ENCODE measurements at regions of chr1 and their contacts with region 1.

Region 1: GRCh38 chr1:225777583-225778336 is at the start of gene SRP9:
- DNase-seq: peak; percentile 100
- H3K4me3 Mint-ChIP-seq: no peak within 1 kb of the TSS
- H3K27ac Mint-ChIP-seq: no peak within 1 kb of the TSS
- H3K4me1 Mint-ChIP-seq: peaks cover 21% of the 10 kb centered on the region
- H3K27me3 Mint-ChIP-seq: no peaks in the 10 kb centered on the region
- CTCF ChIP-seq: peak; percentile 96
- total RNA-seq, gene SRP9: 417 and 511 TPM in 2 replicates

Region 2: GRCh38 chr1:225517697-225518096 is 260.1 kb before region 1 on chr1:
- CTCF ChIA-PET with region 1: interaction called, 8 read pairs
- POLR2A ChIA-PET with region 1: interaction called, 11 read pairs
- intact Hi-C with region 1: no loop called
- DNase-seq: no peak
- H3K4me3 Mint-ChIP-seq: no peak overlapping the region
- H3K27ac Mint-ChIP-seq: no peak overlapping the region
- H3K4me1 Mint-ChIP-seq: peaks cover 5% of the 10 kb centered on the region
- H3K27me3 Mint-ChIP-seq: no peaks in the 10 kb centered on the region
- CTCF ChIP-seq: no peak

Region 3: GRCh38 chr1:225652729-225653462 is 124.9 kb before region 1 on chr1 and contains the start of gene ENAH:
- CTCF ChIA-PET with region 1: interaction called, 68 read pairs
- POLR2A ChIA-PET with region 1: interaction called, 188 read pairs
- intact Hi-C with region 1: loop called (anchors 1 kb)
- DNase-seq: peak; percentile 93
- H3K4me3 Mint-ChIP-seq: peak within 1 kb of the TSS; percentile 99
- H3K27ac Mint-ChIP-seq: peak within 1 kb of the TSS; percentile 94
- H3K4me1 Mint-ChIP-seq: peaks cover 67% of the 10 kb centered on the region
- H3K27me3 Mint-ChIP-seq: no peaks in the 10 kb centered on the region
- CTCF ChIP-seq: no peak
- total RNA-seq, gene ENAH: 346 and 420 TPM in 2 replicates

Region 4: DNA sequence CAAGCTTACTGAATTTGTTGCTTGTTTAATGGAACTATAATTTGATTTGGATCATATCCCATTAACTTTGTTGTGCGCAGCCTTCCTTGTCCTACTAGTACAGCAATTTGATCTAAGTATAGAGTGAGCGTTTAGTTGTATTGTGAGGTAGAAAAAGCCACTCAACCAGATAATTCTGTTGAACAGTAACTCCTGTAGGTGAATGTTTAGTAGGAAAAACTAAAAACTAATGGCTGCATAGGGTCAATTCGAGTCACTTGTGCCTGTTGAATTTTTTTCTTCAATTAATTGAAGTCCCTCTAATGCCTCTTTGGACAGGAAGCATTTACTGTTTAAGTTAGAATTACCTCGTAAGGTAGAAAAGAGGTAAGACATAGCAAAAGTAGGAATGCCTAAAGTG is 17.2 kb after region 1 on chr1:
- CTCF ChIA-PET with region 1: interaction called, 10 read pairs
- POLR2A ChIA-PET with region 1: interaction called, 36 read pairs
- intact Hi-C with region 1: no loop called
- DNase-seq: no peak
- H3K4me3 Mint-ChIP-seq: no peak overlapping the region
- H3K27ac Mint-ChIP-seq: no peak overlapping the region
- H3K4me1 Mint-ChIP-seq: no peaks in the 10 kb centered on the region
- H3K27me3 Mint-ChIP-seq: no peaks in the 10 kb centered on the region
- CTCF ChIP-seq: no peak

Region 5: GRCh38 chr1:225881969-225882693 is 104.4 kb after region 1 on chr1 and contains the start of gene TMEM63A:
- CTCF ChIA-PET with region 1: interaction called, 25 read pairs
- POLR2A ChIA-PET with region 1: interaction called, 70 read pairs
- intact Hi-C with region 1: loop called (anchors 1 kb)
- DNase-seq: peak; percentile 92
- H3K4me3 Mint-ChIP-seq: peak within 1 kb of the TSS; percentile 91
- H3K27ac Mint-ChIP-seq: peak within 1 kb of the TSS; percentile 82
- H3K4me1 Mint-ChIP-seq: peaks cover 51% of the 10 kb centered on the region
- H3K27me3 Mint-ChIP-seq: no peaks in the 10 kb centered on the region
- CTCF ChIP-seq: peak; percentile 25
- total RNA-seq, gene TMEM63A: 52.1 and 71.2 TPM in 2 replicates

Region 6: DNA sequence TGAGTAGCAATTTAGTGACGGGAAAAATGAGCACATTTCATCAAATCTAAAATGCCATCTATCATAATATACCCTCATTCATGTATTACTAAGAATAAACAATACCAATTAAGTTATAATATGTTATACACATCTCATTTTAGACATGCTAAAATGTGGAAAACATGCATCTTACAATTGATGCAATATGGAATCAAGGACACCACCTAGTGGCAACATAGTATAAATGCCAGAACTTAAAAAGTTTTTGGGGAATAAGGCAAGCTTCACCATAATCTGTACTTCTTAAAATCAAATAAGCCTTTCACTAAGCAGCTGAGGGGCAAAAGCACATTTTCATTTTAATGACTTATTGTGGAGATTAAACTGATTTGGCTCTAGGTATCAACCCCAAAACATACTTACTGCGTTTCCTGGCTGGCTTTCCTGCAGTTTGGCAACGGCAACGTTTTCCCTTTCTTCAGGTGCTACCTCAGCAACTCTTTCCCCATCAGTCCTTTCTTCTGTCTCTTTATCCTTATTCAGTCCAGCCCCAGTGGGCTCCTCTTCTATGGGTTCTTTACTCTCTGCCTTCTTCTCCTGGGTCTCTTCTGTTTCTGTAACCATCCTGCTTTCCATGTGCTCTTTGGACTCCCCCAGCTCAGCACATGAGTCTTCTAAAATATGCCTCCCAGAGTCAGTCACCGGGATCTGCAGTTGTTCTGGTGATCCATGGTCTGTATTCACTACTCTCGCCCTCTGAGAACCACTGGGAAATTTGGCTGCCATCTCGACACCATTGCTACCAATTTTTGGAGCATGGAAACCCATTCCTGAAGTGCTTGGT is 209.9 kb after region 1 on chr1:
- CTCF ChIA-PET with region 1: interaction called, 119 read pairs
- POLR2A ChIA-PET with region 1: interaction called, 38 read pairs
- intact Hi-C with region 1: no loop called
- DNase-seq: peak; percentile 77
- H3K4me3 Mint-ChIP-seq: no peak overlapping the region
- H3K27ac Mint-ChIP-seq: no peak overlapping the region
- H3K4me1 Mint-ChIP-seq: peaks cover 6% of the 10 kb centered on the region
- H3K27me3 Mint-ChIP-seq: no peaks in the 10 kb centered on the region
- CTCF ChIP-seq: peak; percentile 89

Measured in MCF 10A (cell line).